ENCODE measurements at regions of chr14 and their contacts with region 1.

Region 1: DNA sequence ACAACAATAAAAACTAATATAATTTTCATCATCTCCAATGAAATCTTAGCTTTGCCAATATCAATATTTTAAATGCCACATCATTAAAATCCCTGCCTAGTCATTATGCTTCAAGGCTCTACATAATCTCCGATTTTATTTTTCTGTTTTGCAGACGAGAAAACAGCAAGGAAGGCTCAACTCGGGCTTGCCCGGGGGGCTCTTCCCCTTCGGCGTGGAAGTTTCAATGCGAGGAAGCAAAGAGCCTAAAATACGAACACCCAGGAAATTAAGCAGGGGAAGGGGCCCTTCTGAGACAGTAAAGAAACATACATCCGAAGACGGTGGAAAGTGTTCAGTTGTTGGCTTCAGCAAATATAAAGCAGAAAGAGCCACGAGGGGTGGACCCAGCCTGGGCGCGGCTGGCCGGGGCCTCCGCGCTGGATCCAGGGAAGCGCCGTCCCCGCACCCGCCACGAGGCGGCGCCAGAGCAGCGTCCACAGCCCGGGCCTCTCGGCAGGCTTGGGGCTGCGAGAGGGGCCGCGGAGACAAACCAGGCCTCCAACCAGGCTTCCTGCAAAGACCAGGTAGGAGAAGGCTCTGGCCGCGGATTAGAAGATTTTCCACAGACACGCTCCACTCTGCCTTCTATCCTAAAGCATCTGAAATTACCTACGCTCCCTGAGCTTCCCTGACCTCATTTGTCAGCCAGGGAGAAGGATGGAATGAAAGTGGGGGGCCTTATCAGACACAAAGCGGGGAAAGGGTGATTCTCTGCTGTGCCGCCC is 77.2 kb downstream of the SERPINA3 start:
- DNase-seq: peak; percentile 16
- H3K4me3 Mint-ChIP-seq: no peak overlapping the region
- H3K27ac Mint-ChIP-seq: no peak overlapping the region
- H3K4me1 Mint-ChIP-seq: no peaks in the 10 kb centered on the region
- H3K27me3 Mint-ChIP-seq: peaks cover 11% of the 10 kb centered on the region

Region 2: GRCh38 chr14:94748667-94749347 is 59.4 kb after region 1 on chr14:
- intact Hi-C with region 1: loop called (anchors 2 kb)
- DNase-seq: no peak
- H3K4me3 Mint-ChIP-seq: no peak overlapping the region
- H3K27ac Mint-ChIP-seq: no peak overlapping the region
- H3K4me1 Mint-ChIP-seq: no peaks in the 10 kb centered on the region
- H3K27me3 Mint-ChIP-seq: peaks cover 2% of the 10 kb centered on the region

Region 3: GRCh38 chr14:94907626-94908261 is 218.3 kb after region 1 on chr14:
- intact Hi-C with region 1: no loop called
- DNase-seq: no peak
- H3K4me3 Mint-ChIP-seq: no peak overlapping the region
- H3K27ac Mint-ChIP-seq: no peak overlapping the region
- H3K4me1 Mint-ChIP-seq: no peaks in the 10 kb centered on the region
- H3K27me3 Mint-ChIP-seq: peaks cover 3% of the 10 kb centered on the region

Region 4: DNA sequence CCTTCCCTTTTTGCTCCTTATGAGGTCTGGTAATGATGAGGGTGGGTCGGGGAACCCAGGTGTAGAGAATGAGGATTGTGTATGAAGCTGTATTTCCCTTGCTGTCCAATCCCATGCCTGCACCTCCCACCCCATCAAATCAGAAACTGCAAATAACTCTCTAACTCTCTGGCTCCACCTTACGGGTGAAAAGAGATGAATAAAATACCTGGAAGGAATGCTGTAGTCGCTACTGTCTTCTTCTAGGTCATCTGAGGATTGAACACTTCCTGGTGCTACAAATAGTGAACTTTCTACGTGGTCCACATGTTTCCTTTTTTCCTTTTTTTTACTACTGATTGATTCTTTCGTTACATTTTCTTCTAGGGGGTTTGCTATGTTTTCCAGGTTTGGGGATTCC is 506.9 kb after region 1 on chr14:
- intact Hi-C with region 1: loop called (anchors 5 kb)
- DNase-seq: no peak
- H3K4me3 Mint-ChIP-seq: no peak overlapping the region
- H3K27ac Mint-ChIP-seq: no peak overlapping the region
- H3K4me1 Mint-ChIP-seq: no peaks in the 10 kb centered on the region
- H3K27me3 Mint-ChIP-seq: peaks cover 2% of the 10 kb centered on the region

Region 5: DNA sequence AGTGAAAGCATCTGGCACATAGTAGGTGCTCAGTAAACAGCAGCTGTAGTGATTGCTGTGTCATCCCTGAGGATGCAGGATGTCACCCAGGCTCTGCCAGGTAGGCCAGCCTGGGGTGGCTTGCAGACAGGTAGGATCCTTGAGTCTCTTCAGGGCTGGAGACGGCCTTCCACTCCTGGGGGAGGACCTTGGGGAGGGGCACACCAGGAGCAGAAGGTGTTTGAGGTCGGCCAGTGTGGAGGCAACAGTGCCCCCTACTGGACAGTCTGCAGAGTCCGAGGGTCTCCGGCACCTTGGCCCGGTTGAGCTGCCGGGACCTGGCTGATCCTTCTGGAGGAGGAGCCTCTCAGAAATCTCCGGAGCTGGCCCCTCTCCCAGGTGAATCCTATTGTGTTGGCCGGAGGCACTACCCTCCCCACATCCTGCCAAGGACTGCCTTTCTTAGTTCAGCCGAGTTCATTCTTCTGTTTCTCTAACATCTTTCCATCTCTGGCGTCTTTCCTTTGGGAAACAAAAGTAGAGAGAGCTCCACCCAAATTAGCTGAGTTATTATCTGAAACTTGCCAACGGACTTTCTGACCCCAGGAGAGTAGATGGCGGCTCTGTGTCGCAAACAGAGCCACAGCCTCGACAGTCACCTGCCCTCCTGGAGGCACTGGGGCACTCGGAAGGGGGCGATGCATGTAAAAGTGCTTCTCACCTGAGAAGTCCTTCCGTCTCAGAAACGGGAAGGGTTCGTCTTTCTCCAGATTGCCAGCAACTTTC is 672.2 kb after region 1 on chr14:
- intact Hi-C with region 1: loop called (anchors 10 kb)
- DNase-seq: no peak
- H3K4me3 Mint-ChIP-seq: no peak overlapping the region
- H3K27ac Mint-ChIP-seq: no peak overlapping the region
- H3K4me1 Mint-ChIP-seq: no peaks in the 10 kb centered on the region
- H3K27me3 Mint-ChIP-seq: peaks cover 40% of the 10 kb centered on the region